ENCODE measurements at regions of chr17 and their contacts with region 1.

Region 1: DNA sequence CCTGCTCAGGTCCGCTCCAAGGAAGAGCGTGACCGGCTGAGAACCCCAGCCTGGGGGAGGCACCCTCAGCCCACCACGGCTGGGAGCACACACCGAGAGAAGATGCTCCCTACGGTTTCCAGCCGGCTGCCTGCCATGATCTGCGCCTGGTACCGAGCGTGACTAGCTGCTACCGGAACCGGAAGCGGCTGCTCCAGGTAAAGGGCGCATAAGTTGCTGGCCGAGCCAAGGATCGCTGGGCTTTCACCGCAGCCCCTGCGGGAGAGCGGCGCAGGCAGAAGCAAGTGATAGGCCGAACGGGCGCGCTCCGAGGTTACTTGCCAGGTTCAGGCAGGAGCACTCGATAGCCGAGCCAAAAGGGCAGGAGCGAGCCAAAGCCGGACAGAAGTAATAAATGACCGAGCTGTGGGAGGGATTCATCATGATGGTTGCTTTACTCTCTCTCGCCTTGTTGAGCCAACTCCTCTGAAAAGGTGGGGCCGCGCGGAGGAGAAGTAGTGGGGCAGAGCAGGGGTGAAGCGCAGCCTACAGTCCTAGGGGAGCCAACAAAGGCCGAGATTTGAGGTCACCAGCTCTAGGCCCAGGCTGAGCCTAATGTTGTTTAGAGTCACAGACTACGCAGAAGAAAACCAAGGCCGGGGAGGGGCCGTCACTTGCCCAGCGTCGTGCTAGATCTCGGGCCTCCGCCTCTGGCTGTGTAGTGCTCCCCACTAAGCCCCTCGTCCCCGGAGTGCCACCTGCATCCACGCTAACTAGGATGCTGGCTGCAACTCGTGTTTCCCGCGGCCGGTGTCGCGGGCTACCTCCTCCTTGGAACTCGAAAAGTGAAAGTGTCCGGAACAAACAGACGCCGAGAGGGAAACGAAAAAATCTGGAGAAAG is at the start of gene MRPS23:
- DNase-seq: peak; percentile 92
- ATAC-seq: peak; percentile 97
- H3K4me3 ChIP-seq: peak within 1 kb of the TSS; percentile 96
- H3K27ac ChIP-seq: peak within 1 kb of the TSS; percentile 74
- H3K4me1 ChIP-seq: peaks cover 8% of the 10 kb centered on the region
- H3K27me3 ChIP-seq: no peaks in the 10 kb centered on the region
- CTCF ChIP-seq: no peak
- EP300 ChIP-seq: peak; percentile 6 to 46; a peak in 1 of 4 replicates
- POLR2A ChIP-seq: peak; percentile 95
- RAD21 ChIP-seq: no peak
- polyA plus RNA-seq, gene MRPS23: 186 to 237 TPM

Region 2: GRCh38 chr17:57833179-57833939 is 16.8 kb before region 1 on chr17:
- CTCF ChIA-PET with region 1: interaction called, 23 read pairs
- POLR2A ChIA-PET with region 1: interaction called, 7 read pairs
- RAD21 ChIA-PET with region 1: interaction called, 3 read pairs
- SMC1A ChIA-PET with region 1: no interaction called
- in situ Hi-C with region 1: no loop called
- intact Hi-C with region 1: no loop called
- DNase-seq: no peak
- ATAC-seq: peak; percentile 95
- H3K4me3 ChIP-seq: 0 out of 2 replicates have a peak overlapping the region, but pooled peaks have one; percentile 4
- H3K27ac ChIP-seq: no peak overlapping the region
- H3K4me1 ChIP-seq: peaks cover 5% of the 10 kb centered on the region; the same call in 1 of the 2 replicates
- H3K27me3 ChIP-seq: no peaks in the 10 kb centered on the region
- CTCF ChIP-seq: peak; percentile 87 to 94 (median 92)
- EP300 ChIP-seq: no peak
- POLR2A ChIP-seq: no peak
- RAD21 ChIP-seq: peak; percentile 74

Region 3: DNA sequence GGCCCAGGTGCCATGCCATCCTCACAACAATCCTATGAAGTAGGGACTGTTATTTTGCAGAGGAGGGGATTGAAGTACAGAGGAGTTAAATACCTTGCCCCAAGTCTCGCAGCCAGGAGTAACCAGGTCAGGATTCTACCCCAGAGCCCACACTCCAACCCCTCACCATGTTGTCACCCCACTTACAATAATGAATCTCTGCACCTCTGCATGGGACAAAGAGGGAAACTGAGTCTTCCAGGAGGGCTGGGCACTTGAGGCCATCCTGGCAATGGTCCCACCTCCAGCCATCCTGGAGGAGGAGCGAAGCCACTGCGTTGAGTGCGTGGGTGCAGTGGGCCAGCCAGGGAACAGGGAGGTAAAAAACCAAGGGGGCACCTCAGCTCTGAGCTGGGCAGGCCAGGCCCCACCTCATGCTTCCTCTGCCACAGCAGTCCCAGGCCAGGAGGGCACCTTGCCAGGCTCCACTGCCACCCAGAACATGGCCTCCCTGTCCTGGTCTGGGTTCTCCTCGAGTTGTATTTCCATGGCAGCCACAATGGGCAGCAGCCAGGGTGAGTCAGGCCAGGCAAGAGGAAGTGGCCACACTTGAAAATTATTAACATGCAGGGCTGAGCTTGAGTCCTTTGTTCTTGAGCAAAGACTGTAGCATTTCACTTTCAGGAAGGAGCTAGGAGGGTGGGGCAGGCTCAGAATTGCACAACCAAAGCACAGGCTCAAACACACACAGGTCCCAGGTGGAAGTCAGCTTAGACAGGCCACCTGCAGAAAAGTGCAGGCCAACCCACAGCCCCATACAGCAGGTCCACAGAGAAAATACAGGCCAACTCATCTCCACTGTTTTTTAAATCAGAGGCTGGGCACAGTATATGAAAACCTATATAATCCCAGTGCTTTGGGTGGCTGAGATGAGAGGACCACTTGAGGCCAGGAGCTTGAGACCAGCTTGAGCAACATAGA is 53.0 kb after region 1 on chr17:
- CTCF ChIA-PET with region 1: interaction called, 4 read pairs
- POLR2A ChIA-PET with region 1: no interaction called
- RAD21 ChIA-PET with region 1: no interaction called
- SMC1A ChIA-PET with region 1: interaction called, 3 read pairs
- in situ Hi-C with region 1: no loop called
- intact Hi-C with region 1: loop called (anchors 5 kb)
- DNase-seq: peak; percentile 89
- ATAC-seq: peak; percentile 82
- H3K4me3 ChIP-seq: peak overlapping the region; percentile 35; the same call in 1 of the 2 replicates
- H3K27ac ChIP-seq: peak overlapping the region; percentile 85
- H3K4me1 ChIP-seq: peaks cover 58% of the 10 kb centered on the region
- H3K27me3 ChIP-seq: no peaks in the 10 kb centered on the region
- CTCF ChIP-seq: no peak
- EP300 ChIP-seq: peak; percentile 53 to 77; a peak in 3 of 4 replicates
- POLR2A ChIP-seq: 0 out of 2 replicates have a peak, but pooled peaks have one; percentile 27
- RAD21 ChIP-seq: peak; percentile 26; the same call in 1 of the 2 replicates

Region 4: GRCh38 chr17:58006924-58007780 is 157.0 kb after region 1 on chr17 and contains the start of gene SRSF1:
- CTCF ChIA-PET with region 1: interaction called, 708 read pairs
- POLR2A ChIA-PET with region 1: interaction called, 18 read pairs
- RAD21 ChIA-PET with region 1: interaction called, 239 read pairs
- SMC1A ChIA-PET with region 1: interaction called, 341 read pairs
- in situ Hi-C with region 1: no loop called
- intact Hi-C with region 1: no loop called
- DNase-seq: peak; percentile 97
- ATAC-seq: peak; percentile 91
- H3K4me3 ChIP-seq: peak within 1 kb of the TSS; percentile 98
- H3K27ac ChIP-seq: peak within 1 kb of the TSS; percentile 96
- H3K4me1 ChIP-seq: peaks cover 8% of the 10 kb centered on the region; the same call in 1 of the 2 replicates
- H3K27me3 ChIP-seq: no peaks in the 10 kb centered on the region
- CTCF ChIP-seq: no peak
- EP300 ChIP-seq: peak in 1 of 2 experiments; percentile 62; a peak in 2 of 4 replicates
- POLR2A ChIP-seq: peak; percentile 99
- RAD21 ChIP-seq: no peak
- polyA plus RNA-seq, gene SRSF1: 101 to 104 TPM

Region 5: GRCh38 chr17:58032691-58033415 is 182.7 kb after region 1 on chr17:
- CTCF ChIA-PET with region 1: no interaction called
- POLR2A ChIA-PET with region 1: no interaction called
- RAD21 ChIA-PET with region 1: no interaction called
- SMC1A ChIA-PET with region 1: no interaction called
- in situ Hi-C with region 1: no loop called
- intact Hi-C with region 1: no loop called
- DNase-seq: no peak
- ATAC-seq: no peak
- H3K4me3 ChIP-seq: no peak overlapping the region
- H3K27ac ChIP-seq: no peak overlapping the region
- H3K4me1 ChIP-seq: no peaks in the 10 kb centered on the region
- H3K27me3 ChIP-seq: 0 out of 4 replicates have a peak, but pooled peaks cover 0 to 2% of the 10 kb centered on the region in 2 experiments
- CTCF ChIP-seq: no peak
- EP300 ChIP-seq: no peak
- POLR2A ChIP-seq: no peak
- RAD21 ChIP-seq: no peak

Region 6: GRCh38 chr17:58082870-58083490 is 232.9 kb after region 1 on chr17 and contains the start of gene DYNLL2:
- CTCF ChIA-PET with region 1: no interaction called
- POLR2A ChIA-PET with region 1: no interaction called
- RAD21 ChIA-PET with region 1: interaction called, 3 read pairs
- SMC1A ChIA-PET with region 1: no interaction called
- in situ Hi-C with region 1: no loop called
- intact Hi-C with region 1: loop called (anchors 10 kb)
- DNase-seq: peak; percentile 25
- ATAC-seq: peak; percentile 87
- H3K4me3 ChIP-seq: peak within 1 kb of the TSS; percentile 78
- H3K27ac ChIP-seq: peak within 1 kb of the TSS; percentile 76
- H3K4me1 ChIP-seq: peaks cover 15% of the 10 kb centered on the region
- H3K27me3 ChIP-seq: peaks cover 0 to 9% of the 10 kb centered on the region in 2 experiments; a peak in 1 of 4 replicates
- CTCF ChIP-seq: no peak
- EP300 ChIP-seq: no peak
- POLR2A ChIP-seq: no peak
- RAD21 ChIP-seq: no peak
- polyA plus RNA-seq, gene DYNLL2: 1.9 to 2.8 TPM

Region 7: DNA sequence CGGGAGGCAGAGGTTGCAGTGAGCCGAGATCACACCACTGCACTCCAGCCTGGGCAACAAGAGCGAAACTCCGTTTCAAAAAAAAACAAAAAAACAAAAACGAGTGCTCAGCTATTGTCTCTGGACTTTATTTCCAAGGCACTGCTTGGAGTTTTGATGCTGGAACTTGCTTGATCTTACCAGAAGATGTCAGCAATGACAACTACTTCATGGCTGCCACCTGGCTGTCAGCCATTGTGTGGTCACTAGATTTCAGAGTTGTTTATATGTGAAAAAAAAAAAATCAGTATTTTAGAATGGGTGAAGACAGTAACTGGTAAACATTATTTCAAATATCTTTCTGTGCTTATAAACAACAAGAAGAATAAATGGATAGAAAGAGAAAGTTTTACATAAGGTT is 271.8 kb after region 1 on chr17:
- CTCF ChIA-PET with region 1: interaction called, 3 read pairs
- POLR2A ChIA-PET with region 1: no interaction called
- RAD21 ChIA-PET with region 1: no interaction called
- SMC1A ChIA-PET with region 1: no interaction called
- in situ Hi-C with region 1: loop called (anchors 5 kb)
- intact Hi-C with region 1: no loop called
- DNase-seq: no peak
- ATAC-seq: no peak
- H3K4me3 ChIP-seq: no peak overlapping the region
- H3K27ac ChIP-seq: no peak overlapping the region
- H3K4me1 ChIP-seq: no peaks in the 10 kb centered on the region
- H3K27me3 ChIP-seq: no peaks in the 10 kb centered on the region
- CTCF ChIP-seq: peak; percentile 9 to 39 (median 35); a peak in 4 of 6 replicates
- EP300 ChIP-seq: no peak
- POLR2A ChIP-seq: no peak
- RAD21 ChIP-seq: peak; percentile 39

Region 8: GRCh38 chr17:58172369-58173071 is 322.4 kb after region 1 on chr17:
- CTCF ChIA-PET with region 1: no interaction called
- POLR2A ChIA-PET with region 1: no interaction called
- RAD21 ChIA-PET with region 1: no interaction called
- SMC1A ChIA-PET with region 1: no interaction called
- in situ Hi-C with region 1: no loop called
- intact Hi-C with region 1: loop called (anchors 1 kb)
- DNase-seq: peak; percentile 3
- ATAC-seq: peak; percentile 78
- H3K4me3 ChIP-seq: no peak overlapping the region
- H3K27ac ChIP-seq: no peak overlapping the region
- H3K4me1 ChIP-seq: no peaks in the 10 kb centered on the region
- H3K27me3 ChIP-seq: no peaks in the 10 kb centered on the region; a peak in 2 of 4 replicates
- CTCF ChIP-seq: peak; percentile 49 to 57 (median 56); a peak in 5 of 6 replicates
- EP300 ChIP-seq: no peak
- POLR2A ChIP-seq: no peak
- RAD21 ChIP-seq: peak; percentile 56